Aorta (tissue), 5 donors: ENCODE measurements at regions of chr16 and their contacts with region 1.

Region 1: DNA sequence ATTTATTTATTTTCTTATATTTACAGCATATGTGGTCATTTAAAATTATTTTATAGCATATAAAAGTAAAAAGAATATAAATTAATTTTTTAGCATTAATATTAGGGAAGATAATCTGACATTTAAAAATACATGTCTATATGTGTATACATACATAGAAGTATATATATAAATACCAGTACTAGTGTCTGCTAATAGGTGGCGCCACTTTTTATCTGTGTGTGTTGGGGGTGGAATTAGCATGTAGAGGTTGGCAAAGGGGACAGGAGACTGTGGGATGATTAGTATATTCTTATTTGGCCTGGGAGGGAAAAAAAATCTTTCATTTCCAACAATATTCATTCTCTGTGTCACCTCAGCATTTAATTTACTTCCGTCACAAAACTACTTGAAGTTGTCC is 359.1 kb downstream of the WWOX start:
- DNase-seq: no peak
- ATAC-seq: no peak
- H3K4me3 ChIP-seq: no peak overlapping the region
- H3K27ac ChIP-seq: no peak overlapping the region
- H3K4me1 ChIP-seq: peaks cover 5 to 16% of the 10 kb centered on the region in 2 donors
- H3K27me3 ChIP-seq: no peaks in the 10 kb centered on the region

Region 2: DNA sequence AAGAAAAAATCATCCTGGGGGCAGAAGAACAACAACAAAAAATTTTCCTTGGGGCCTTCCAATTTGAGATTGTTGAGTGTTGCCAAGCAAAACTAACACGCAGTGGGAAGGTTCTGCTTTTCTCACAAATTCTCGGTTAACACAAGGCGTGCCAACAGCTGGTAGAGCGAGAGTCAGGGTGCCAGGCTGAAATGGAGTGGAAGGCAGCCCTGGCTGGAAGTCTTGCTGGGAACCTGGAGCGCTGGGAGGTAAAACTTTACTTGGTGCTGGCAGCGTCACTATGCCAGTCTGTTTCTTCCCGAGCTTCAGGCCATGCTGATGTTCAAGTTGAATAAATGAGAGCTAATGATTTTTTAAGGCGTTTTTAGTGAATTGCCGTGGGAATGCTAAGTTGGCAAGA is 169.7 kb before region 1 on chr16:
- intact Hi-C with region 1: loop called in 1 of 2 experiments (anchors 10 kb)
- DNase-seq: peak in 1 of 2 donors; percentile 57
- ATAC-seq: no peak
- H3K4me3 ChIP-seq: no peak overlapping the region
- H3K27ac ChIP-seq: peak overlapping the region in 1 of 2 donors; percentile 52
- H3K4me1 ChIP-seq: peaks cover 0 to 9% of the 10 kb centered on the region in 2 donors
- H3K27me3 ChIP-seq: no peaks in the 10 kb centered on the region